ENCODE measurements at regions of chr17 and their contacts with region 1.

Region 1: GRCh38 chr17:72338847-72339790 is 218.3 kb downstream of the SOX9 start:
- DNase-seq: peak; percentile 86
- H3K4me3 ChIP-seq: 0 out of 2 replicates have a peak overlapping the region, but pooled peaks have one; percentile 17
- H3K27ac ChIP-seq: peak overlapping the region; percentile 98
- H3K27me3 ChIP-seq: no peaks in the 10 kb centered on the region
- CTCF ChIP-seq: no peak

Region 2: DNA sequence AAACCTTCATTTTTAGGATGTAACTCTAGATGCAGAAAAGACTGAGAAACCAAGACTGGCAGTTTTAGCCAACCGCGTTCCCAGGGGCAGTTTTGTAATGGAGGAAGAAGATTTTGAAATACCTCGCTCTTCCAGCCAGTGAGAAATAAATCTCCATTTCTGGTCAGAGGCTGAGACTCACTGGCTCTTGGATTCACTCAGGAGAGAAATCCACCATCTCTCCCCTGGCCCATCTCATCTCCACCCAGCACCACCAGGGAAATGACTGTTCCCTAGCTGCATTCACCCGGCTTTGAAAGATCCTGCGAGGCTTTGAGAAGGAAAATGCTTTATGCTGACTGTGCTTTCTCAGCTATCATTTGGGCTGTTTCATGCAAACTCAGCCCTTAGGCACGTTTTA is 33.1 kb before region 1 on chr17:
- CTCF ChIA-PET with region 1: no interaction called
- POLR2A ChIA-PET with region 1: no interaction called
- DNase-seq: no peak
- H3K4me3 ChIP-seq: no peak overlapping the region
- H3K27ac ChIP-seq: no peak overlapping the region
- H3K27me3 ChIP-seq: no peaks in the 10 kb centered on the region
- CTCF ChIP-seq: no peak

Region 3: GRCh38 chr17:72434991-72435618 is 96.0 kb after region 1 on chr17:
- CTCF ChIA-PET with region 1: no interaction called
- POLR2A ChIA-PET with region 1: interaction called, 16 read pairs
- DNase-seq: no peak
- H3K4me3 ChIP-seq: no peak overlapping the region
- H3K27ac ChIP-seq: no peak overlapping the region
- H3K27me3 ChIP-seq: no peaks in the 10 kb centered on the region
- CTCF ChIP-seq: no peak

Region 4: GRCh38 chr17:72539981-72540897 is 201.1 kb after region 1 on chr17:
- CTCF ChIA-PET with region 1: interaction called, 10 read pairs
- POLR2A ChIA-PET with region 1: interaction called, 4 read pairs
- DNase-seq: no peak
- H3K4me3 ChIP-seq: peak overlapping the region; percentile 52
- H3K27ac ChIP-seq: peak overlapping the region; percentile 47
- H3K27me3 ChIP-seq: no peaks in the 10 kb centered on the region
- CTCF ChIP-seq: peak; percentile 76

Measured in AG04450 (cell line).